Prostate gland (tissue), 2 donors: ENCODE measurements at regions of chr11 and their contacts with region 1.

Region 1: DNA sequence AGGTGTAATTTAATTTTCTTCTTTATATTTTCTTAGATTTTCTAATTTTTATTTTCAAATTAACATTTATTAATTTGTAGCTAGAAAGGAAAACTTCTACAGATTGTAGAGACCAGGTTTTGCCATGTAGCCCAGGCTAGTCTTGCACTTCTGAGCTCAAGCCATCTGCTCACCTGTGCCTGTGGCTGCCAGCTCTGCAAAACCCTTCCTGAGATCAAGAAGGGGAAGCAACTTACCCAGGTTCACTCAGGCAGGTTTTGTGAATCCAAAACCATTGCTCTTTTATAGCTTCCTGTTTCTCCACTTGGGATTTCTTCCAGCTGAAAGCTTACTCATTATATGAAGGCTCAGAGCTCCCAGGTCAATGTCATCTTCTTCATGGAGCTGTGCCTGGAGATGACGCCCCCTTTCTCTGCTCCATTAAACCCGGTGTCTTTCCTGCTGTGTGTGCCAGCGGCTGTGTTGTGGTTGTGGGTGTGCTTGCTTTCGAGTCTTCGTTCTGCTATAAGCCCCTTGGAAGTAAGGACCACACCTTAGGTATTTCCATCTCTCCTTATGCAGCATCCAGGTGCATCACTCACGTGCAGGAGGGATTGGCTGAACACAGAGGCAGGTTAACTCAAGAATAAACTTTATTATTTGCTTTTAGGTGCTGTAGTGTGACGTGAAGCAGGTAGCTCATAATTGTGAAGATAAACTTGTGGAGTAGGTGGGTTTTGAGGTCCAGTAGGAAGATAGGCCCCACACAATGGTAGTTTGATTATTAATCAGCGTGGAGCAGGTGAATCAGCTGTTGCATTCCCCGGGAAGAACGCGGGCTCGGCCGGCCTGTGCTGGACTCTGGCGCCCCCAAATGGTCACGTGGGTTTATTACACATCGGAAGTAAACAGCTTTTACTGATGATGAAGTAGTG is 42.2 kb upstream of the INCENP start:
- DNase-seq: peak; percentile 69
- H3K4me3 ChIP-seq: no peak overlapping the region
- H3K27ac ChIP-seq: no peak overlapping the region
- H3K4me1 ChIP-seq: no peaks in the 10 kb centered on the region
- H3K27me3 ChIP-seq: no peaks in the 10 kb centered on the region
- CTCF ChIP-seq: peak; percentile 78 to 92 (median 92)
- POLR2A ChIP-seq: no peak

Region 2: DNA sequence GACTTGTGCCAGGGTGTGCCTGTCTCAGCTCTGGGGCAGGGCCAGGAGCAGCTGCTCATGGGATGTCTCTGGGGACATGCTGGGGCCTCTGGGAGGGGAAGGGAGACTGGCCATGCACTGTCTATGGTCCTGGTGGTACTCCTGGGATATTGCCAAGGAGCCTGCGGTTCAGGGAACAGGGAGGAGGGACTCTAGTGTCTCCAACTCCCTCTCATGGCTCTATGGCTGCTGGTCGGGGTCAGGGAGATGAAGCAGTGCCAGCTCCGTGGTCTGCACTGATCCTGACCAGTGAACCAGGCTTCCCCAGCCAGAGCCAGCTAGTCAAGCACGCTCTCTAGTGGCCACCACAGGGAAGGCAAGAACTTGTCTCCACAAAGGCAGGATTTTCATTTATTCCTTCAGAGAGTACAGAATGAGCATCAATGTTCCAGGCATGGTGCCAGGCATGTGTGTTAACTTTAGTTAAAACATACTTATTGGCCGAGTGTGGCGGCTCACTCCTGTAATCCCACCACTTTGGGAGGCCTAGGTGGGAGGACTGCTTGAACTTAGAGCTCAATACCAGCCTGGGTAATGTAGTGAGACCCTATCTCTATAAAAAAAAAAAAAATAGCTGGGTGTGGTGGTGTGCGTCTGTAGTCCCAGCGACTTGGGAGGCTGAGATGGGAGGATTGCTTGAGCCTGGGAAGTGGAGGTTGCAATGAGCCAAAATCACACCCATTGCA is 134.0 kb before region 1 on chr11:
- intact Hi-C with region 1: loop called (anchors 5 kb)
- DNase-seq: peak; percentile 82
- H3K4me3 ChIP-seq: no peak overlapping the region
- H3K27ac ChIP-seq: no peak overlapping the region
- H3K4me1 ChIP-seq: no peaks in the 10 kb centered on the region
- H3K27me3 ChIP-seq: no peaks in the 10 kb centered on the region
- CTCF ChIP-seq: peak; percentile 69 to 91 (median 83)
- POLR2A ChIP-seq: no peak

Region 3: DNA sequence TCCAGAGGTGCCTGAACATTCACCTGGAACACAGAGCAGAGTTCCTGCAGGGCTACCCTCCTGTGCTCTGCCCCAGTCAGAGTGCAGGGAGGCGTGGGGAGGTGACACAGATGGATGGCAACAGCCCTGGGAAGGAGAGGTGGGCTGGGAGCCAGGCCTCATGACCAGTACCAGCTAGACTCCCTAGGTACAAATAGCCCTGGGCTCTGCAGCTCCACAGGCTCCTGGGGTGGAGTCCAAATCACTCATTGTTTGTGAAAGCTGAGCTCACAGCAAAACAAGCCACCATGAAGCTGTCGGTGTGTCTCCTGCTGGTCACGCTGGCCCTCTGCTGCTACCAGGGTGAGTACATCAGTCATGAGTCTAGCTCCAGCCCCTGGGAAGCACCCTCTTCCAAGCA is 160.4 kb after region 1 on chr11 and contains the start of gene SCGB1D2:
- intact Hi-C with region 1: no loop called
- DNase-seq: peak; percentile 93
- H3K4me3 ChIP-seq: no peak within 1 kb of the TSS
- H3K27ac ChIP-seq: no peak within 1 kb of the TSS
- H3K4me1 ChIP-seq: peaks cover under 1% of the 10 kb centered on the region
- H3K27me3 ChIP-seq: no peaks in the 10 kb centered on the region
- CTCF ChIP-seq: peak in 1 of 4 experiments; percentile 31
- POLR2A ChIP-seq: no peak
- total RNA-seq, gene SCGB1D2: 40.5 TPM in 1 of 2 donors, not detected in the other

Region 4: DNA sequence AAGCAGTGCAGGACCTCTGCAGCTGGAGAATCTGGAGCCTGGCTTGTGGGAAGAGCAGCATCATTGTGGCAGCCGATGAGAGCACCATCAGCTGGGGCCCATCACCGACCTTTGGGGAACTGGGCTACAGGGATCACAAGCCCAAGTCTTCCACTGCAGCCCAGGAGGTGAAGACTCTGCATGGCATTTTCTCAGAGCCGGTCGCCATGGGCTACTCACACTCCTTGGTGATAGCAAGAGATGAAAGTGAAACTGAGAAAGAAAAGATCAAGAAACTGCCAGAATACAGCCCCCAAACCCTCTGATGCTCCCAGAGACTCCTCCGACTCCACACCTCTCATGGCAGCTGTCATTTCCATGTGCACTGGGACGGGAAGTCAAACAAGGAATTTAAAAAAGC is 291.2 kb after region 1 on chr11:
- intact Hi-C with region 1: no loop called
- DNase-seq: no peak
- H3K4me3 ChIP-seq: no peak overlapping the region
- H3K27ac ChIP-seq: no peak overlapping the region
- H3K4me1 ChIP-seq: peaks cover 4% of the 10 kb centered on the region
- H3K27me3 ChIP-seq: no peaks in the 10 kb centered on the region
- CTCF ChIP-seq: no peak
- POLR2A ChIP-seq: no peak